AG04449 (cell line): ENCODE measurements at regions of chr20 and their contacts with region 1.

Region 1: GRCh38 chr20:40990542-40991120 is 38.0 kb upstream of the TOP1 start:
- DNase-seq: no peak
- H3K4me3 ChIP-seq: no peak overlapping the region
- CTCF ChIP-seq: peak; percentile 90

Region 2: DNA sequence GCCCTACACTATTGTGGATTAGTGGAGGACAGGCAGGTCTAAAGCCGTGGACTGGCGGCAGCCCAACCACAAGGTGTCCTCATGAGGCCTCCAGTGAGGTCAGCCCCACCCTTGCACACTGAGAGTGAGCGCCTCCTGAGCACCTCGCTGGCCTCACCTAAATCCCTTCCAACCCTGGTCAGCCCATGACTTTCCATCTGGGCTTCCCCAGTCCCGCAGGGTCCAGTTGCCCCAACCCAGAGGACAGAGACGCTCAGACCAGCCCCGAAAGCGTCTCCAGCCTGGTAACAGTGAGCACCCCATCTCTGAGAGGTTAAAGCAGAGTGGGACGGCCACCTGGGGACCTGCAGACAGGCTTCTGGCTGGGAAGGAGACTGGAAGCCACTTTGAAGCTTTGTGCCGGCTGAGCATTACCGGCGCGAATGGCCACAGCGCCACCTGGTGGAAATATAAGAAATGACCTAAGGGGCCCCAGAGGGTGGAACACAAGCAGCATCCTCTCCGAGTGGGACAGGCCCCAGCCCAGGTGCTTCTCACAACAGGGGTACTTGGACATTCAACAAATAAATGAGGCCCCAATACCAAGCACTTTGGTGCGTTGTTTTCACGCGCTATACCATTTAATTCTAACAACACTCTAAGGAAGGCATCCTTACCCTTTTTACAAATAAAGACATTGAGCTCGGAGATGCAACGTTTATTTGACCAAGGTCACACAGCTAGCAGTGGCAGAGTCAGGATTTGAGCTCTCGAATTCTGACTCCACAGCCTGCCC is 27.7 kb before region 1 on chr20:
- CTCF ChIA-PET with region 1: interaction called, 33 read pairs
- POLR2A ChIA-PET with region 1: no interaction called
- DNase-seq: no peak
- H3K4me3 ChIP-seq: no peak overlapping the region
- CTCF ChIP-seq: peak; percentile 63

Region 3: DNA sequence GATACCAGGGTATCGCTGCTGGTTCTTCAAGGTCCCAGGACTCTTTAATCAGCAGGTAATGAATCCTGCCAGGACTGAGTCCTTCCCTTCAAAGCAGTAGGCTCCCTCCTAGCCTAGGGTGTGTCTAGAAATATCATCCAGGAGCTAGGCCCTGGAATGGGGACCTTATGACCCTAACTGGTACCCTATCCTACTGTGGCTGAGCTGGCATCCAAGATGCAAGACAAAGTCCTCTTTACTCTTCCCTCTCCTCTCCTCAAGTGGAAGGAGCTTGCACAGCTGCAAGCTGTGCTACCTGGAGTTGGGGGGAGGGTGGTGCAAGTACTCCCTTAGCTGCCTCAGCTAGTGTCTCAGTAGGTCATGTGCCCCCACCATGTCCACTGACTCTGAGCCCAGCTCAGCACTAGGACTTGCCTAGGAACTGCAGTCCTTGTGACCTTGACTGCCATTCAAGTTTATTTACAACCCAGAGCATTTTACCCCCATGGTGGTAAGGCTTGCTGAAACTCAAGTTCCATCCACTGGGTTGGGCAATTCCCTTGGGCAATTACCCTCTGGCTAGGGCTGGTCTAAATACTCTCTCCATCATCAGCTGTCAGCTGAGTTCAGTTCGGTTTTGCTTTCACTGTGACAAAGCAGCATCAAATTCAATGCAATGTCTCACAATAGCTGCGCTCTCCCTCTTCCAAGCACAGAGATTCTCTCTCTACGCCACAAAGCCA is 10.4 kb before region 1 on chr20:
- CTCF ChIA-PET with region 1: interaction called, 72 read pairs
- POLR2A ChIA-PET with region 1: no interaction called
- DNase-seq: no peak
- H3K4me3 ChIP-seq: no peak overlapping the region
- CTCF ChIP-seq: no peak

Region 4: GRCh38 chr20:41030531-41031244 is 40.1 kb after region 1 on chr20:
- CTCF ChIA-PET with region 1: interaction called, 14 read pairs
- POLR2A ChIA-PET with region 1: no interaction called
- DNase-seq: no peak
- H3K4me3 ChIP-seq: peak overlapping the region; percentile 91
- CTCF ChIP-seq: no peak

Region 5: GRCh38 chr20:41078329-41078728 is 87.7 kb after region 1 on chr20:
- CTCF ChIA-PET with region 1: interaction called, 307 read pairs
- POLR2A ChIA-PET with region 1: interaction called, 3 read pairs
- DNase-seq: peak; percentile 33
- H3K4me3 ChIP-seq: no peak overlapping the region
- CTCF ChIP-seq: peak; percentile 37

Region 6: GRCh38 chr20:41095110-41095969 is 104.7 kb after region 1 on chr20:
- CTCF ChIA-PET with region 1: interaction called, 439 read pairs
- POLR2A ChIA-PET with region 1: interaction called, 3 read pairs
- DNase-seq: peak; percentile 14
- H3K4me3 ChIP-seq: no peak overlapping the region
- CTCF ChIP-seq: peak; percentile 67

Region 7: GRCh38 chr20:41119546-41120235 is 129.1 kb after region 1 on chr20:
- CTCF ChIA-PET with region 1: interaction called, 10 read pairs
- POLR2A ChIA-PET with region 1: no interaction called
- DNase-seq: no peak
- H3K4me3 ChIP-seq: no peak overlapping the region
- CTCF ChIP-seq: no peak